CD14-positive monocyte (primary cell): ENCODE measurements at regions of chr3 and their contacts with region 1.

Region 1: GRCh38 chr3:55597638-55598037 is 110.5 kb upstream of the WNT5A start:
- DNase-seq: no peak
- H3K4me3 ChIP-seq: no peak overlapping the region
- H3K4me3 Mint-ChIP-seq: no peak overlapping the region
- H3K27ac ChIP-seq: no peak overlapping the region
- H3K27ac Mint-ChIP-seq: no peak overlapping the region
- H3K4me1 ChIP-seq: no peaks in the 10 kb centered on the region
- H3K4me1 Mint-ChIP-seq: peaks cover 7% of the 10 kb centered on the region
- H3K27me3 ChIP-seq: peaks cover 12 to 14% of the 10 kb centered on the region in 2 donors
- H3K27me3 Mint-ChIP-seq: peaks cover 12 to 26% (median 15%) of the 10 kb centered on the region in 3 donors
- CTCF ChIP-seq: no peak

Region 2: DNA sequence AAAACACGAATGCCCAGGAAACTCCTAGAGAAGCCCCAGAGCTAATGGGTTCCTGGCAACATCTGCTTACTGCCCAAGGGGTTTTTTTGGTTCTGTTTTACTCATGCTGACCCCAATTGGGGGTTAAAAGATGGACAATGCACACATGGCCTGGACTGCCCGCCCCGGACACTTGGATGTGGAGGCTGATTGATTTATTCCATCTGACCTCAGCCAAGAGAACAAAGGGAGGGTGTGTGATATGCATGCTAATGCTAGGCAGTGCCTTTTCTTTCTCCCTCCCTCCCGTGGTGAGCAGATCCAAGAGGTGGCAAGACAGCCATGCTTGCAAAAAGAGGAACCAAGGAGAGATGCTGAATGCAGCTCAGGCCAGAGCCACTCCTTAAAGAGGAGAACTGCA is 666.5 kb before region 1 on chr3:
- intact Hi-C with region 1: no loop called
- DNase-seq: no peak
- H3K4me3 ChIP-seq: no peak overlapping the region
- H3K4me3 Mint-ChIP-seq: no peak overlapping the region
- H3K27ac ChIP-seq: no peak overlapping the region
- H3K27ac Mint-ChIP-seq: no peak overlapping the region
- H3K4me1 ChIP-seq: no peaks in the 10 kb centered on the region
- H3K4me1 Mint-ChIP-seq: no peaks in the 10 kb centered on the region
- H3K27me3 ChIP-seq: no peaks in the 10 kb centered on the region
- H3K27me3 Mint-ChIP-seq: peaks cover 2 to 6% (median 4%) of the 10 kb centered on the region in 3 donors
- CTCF ChIP-seq: no peak

Region 3: DNA sequence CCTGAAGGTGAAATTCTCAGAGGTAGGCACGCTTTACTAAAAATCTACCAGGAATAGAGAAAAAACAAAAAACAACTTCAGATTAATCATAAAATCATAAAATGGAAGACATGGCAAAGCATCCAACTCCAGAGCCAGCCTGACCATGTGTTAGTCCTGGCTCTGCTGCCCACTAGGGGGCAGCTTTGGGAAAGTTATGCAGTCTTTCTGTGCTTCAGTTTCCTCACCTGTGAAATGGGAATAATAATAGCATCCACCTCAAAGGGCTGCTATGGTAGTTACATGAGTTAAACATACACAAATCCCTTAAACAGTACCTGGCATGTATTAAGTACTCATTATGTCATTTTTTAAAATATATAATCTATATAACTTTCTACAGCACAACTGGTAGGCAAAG is 162.8 kb before region 1 on chr3:
- intact Hi-C with region 1: no loop called
- DNase-seq: no peak
- H3K4me3 ChIP-seq: no peak overlapping the region
- H3K4me3 Mint-ChIP-seq: no peak overlapping the region
- H3K27ac ChIP-seq: no peak overlapping the region
- H3K27ac Mint-ChIP-seq: no peak overlapping the region
- H3K4me1 ChIP-seq: no peaks in the 10 kb centered on the region
- H3K4me1 Mint-ChIP-seq: no peaks in the 10 kb centered on the region
- H3K27me3 ChIP-seq: no peaks in the 10 kb centered on the region
- H3K27me3 Mint-ChIP-seq: peaks cover 0 to 3% (median 2%) of the 10 kb centered on the region in 3 donors
- CTCF ChIP-seq: peak; percentile 52

Region 4: DNA sequence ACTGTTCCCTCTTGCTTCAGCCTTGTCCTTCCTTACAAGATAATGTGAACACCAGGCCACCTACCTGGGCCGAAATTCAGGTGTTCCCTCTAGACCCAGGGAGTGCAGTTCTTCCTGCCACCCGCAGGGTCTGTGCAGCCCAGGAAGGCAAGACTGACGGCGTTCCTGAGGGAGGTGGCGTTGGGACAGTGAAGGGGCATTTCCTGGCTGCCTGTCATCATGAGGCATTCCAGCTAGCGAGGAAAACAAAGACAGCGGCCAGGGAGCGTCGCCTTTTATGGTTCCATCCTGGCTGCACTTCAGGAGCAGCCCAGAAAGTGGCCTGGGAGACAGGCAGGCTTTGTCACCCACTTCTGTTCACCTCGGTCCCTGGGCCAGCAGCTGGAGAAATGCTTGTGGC is 25.7 kb before region 1 on chr3:
- intact Hi-C with region 1: no loop called
- DNase-seq: no peak
- H3K4me3 ChIP-seq: no peak overlapping the region
- H3K4me3 Mint-ChIP-seq: no peak overlapping the region
- H3K27ac ChIP-seq: no peak overlapping the region
- H3K27ac Mint-ChIP-seq: no peak overlapping the region
- H3K4me1 ChIP-seq: no peaks in the 10 kb centered on the region
- H3K4me1 Mint-ChIP-seq: no peaks in the 10 kb centered on the region
- H3K27me3 ChIP-seq: peaks cover 0 to 5% of the 10 kb centered on the region in 2 donors
- H3K27me3 Mint-ChIP-seq: peaks cover 7 to 17% (median 8%) of the 10 kb centered on the region in 3 donors
- CTCF ChIP-seq: no peak

Region 5: DNA sequence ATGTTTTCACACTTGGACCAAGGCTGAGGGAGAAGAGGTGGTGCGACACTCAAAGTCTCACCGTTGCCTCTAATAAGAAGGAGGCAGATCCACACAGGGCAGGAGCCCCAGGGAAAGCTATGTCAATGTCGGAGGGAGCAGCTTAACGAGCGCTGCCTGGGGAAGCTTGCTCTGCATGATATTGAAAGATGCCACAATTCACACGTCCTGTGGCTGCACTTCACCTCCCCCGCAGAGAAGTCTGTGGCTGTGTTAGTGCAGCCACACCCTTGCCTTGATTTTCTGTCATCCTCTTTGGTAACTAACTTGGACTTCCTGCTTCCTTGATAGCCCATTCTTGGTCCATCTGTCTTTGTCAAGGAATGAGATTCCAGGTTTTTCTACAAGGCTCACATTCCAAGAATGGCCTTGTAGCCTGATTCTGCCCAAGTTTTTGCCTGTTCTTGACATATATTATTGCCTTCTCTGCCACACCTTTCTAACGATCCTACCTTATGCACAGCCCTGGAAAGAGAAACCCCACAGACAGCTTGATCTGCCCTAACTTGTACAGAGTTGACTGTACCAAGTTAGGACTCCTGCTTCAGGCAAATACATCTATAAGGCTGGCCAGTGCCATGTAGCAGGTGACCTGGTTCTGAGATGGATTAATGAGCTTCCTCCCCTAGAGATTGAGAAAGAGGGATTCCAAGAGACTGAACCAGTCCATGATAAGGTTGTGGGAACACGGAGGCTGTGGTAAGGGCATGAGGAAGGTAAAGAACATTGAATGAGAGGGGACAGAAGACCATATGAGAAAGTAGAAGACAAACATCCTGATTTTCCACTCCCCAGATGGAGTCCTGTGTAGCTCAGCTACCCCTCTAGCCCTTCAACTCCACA is 42.5 kb after region 1 on chr3:
- intact Hi-C with region 1: loop called in 1 of 2 experiments (anchors 5 kb)
- DNase-seq: no peak
- H3K4me3 ChIP-seq: peak overlapping the region in 1 of 3 experiments; percentile 15
- H3K4me3 Mint-ChIP-seq: peak overlapping the region; percentile 49 to 76
- H3K27ac ChIP-seq: no peak overlapping the region
- H3K27ac Mint-ChIP-seq: peak overlapping the region in 1 of 7 donors; percentile 37
- H3K4me1 ChIP-seq: peaks cover 14 to 15% of the 10 kb centered on the region in 2 donors
- H3K4me1 Mint-ChIP-seq: peaks cover 15% of the 10 kb centered on the region
- H3K27me3 ChIP-seq: no peaks in the 10 kb centered on the region
- H3K27me3 Mint-ChIP-seq: peaks cover 6 to 20% (median 19%) of the 10 kb centered on the region in 3 donors
- CTCF ChIP-seq: no peak

Region 6: DNA sequence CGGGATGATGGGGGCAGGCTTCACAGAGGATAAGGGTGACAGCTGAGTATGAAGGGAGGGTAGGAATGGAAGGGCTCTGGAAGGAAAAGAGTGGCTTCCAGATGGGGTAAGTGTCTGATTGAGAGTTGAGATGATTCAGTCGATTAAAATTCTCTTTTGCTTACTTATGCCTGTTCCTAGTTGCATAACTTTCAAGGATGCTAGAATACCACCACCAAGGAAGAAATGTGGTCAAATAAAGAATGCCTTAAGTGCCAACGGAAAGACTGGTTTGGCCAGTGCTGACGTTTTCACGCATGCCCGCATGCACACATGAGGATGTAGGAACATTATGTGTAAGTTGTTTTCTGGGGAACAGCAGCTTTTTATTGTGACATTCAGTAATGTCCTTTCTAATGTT is 152.9 kb after region 1 on chr3:
- intact Hi-C with region 1: no loop called
- DNase-seq: no peak
- H3K4me3 ChIP-seq: no peak overlapping the region
- H3K4me3 Mint-ChIP-seq: no peak overlapping the region
- H3K27ac ChIP-seq: no peak overlapping the region
- H3K27ac Mint-ChIP-seq: no peak overlapping the region
- H3K4me1 ChIP-seq: no peaks in the 10 kb centered on the region
- H3K4me1 Mint-ChIP-seq: no peaks in the 10 kb centered on the region
- H3K27me3 ChIP-seq: no peaks in the 10 kb centered on the region
- H3K27me3 Mint-ChIP-seq: peaks cover 3 to 5% (median 3%) of the 10 kb centered on the region in 3 donors
- CTCF ChIP-seq: no peak